OCI-LY7 (cell line): ENCODE measurements at regions of chr20 and their contacts with region 1.

Region 1: GRCh38 chr20:5950271-5951031 is at the starts of genes MCM8 and TRMT6:
- DNase-seq: peak; percentile 99
- H3K4me3 ChIP-seq: peak within 1 kb of the TSS; percentile 87
- H3K27ac ChIP-seq: peak within 1 kb of the TSS; percentile 72
- H3K4me1 ChIP-seq: peaks cover 16% of the 10 kb centered on the region
- CTCF ChIP-seq: no peak
- total RNA-seq, gene MCM8: 43.7 and 46.3 TPM in 2 replicates
- total RNA-seq, gene TRMT6: 22.5 and 26.4 TPM in 2 replicates

Region 2: DNA sequence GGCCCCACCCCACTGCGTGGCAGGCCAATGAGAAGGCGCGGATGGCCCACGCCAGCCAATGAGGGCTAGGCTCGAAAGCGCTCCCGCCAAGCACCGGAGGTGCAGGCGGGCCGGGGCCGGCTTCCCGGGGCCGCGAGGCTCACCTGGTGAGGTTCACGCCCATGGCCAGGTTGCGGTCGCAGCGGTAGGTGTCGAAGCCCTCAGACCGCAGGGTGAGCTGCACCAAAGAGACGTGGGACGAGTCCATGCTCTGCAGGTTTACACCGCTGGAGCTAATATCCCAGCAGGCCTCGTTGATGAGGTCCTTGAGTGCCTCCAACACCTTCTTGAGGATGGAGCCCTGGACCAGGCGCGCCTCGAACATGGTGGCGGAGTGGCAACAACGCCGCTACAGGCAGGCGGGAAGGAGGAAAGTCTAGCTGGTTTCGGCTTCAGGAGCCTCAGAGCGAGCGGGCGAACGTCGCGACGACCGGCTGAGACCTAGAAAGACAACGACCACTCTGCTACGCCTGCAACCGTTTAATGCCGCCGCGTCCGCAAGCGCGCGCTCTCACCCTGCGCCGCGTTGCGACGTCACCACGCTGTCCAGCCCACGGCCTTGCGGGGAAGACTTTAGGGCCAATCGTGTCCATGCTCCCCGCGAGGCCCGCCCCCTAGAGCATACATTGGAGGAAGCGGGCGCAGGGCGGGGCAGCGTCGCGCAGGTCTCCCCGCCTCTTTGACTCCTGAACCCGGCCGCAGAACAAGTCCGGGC is 830.8 kb before region 1 on chr20 and contains the start of gene PCNA:
- CTCF ChIA-PET with region 1: no interaction called
- POLR2A ChIA-PET with region 1: no interaction called
- intact Hi-C with region 1: loop called (anchors 5 kb)
- DNase-seq: peak; percentile 99
- H3K4me3 ChIP-seq: peak within 1 kb of the TSS; percentile 98
- H3K27ac ChIP-seq: peak within 1 kb of the TSS; percentile 89
- H3K4me1 ChIP-seq: peaks cover 47% of the 10 kb centered on the region
- CTCF ChIP-seq: no peak
- total RNA-seq, gene PCNA: 499 and 567 TPM in 2 replicates

Region 3: GRCh38 chr20:5741089-5741488 is 209.4 kb before region 1 on chr20:
- CTCF ChIA-PET with region 1: no interaction called
- POLR2A ChIA-PET with region 1: no interaction called
- intact Hi-C with region 1: no loop called
- DNase-seq: no peak
- H3K4me3 ChIP-seq: no peak overlapping the region
- H3K27ac ChIP-seq: no peak overlapping the region
- H3K4me1 ChIP-seq: peaks cover 41% of the 10 kb centered on the region
- CTCF ChIP-seq: no peak

Region 4: DNA sequence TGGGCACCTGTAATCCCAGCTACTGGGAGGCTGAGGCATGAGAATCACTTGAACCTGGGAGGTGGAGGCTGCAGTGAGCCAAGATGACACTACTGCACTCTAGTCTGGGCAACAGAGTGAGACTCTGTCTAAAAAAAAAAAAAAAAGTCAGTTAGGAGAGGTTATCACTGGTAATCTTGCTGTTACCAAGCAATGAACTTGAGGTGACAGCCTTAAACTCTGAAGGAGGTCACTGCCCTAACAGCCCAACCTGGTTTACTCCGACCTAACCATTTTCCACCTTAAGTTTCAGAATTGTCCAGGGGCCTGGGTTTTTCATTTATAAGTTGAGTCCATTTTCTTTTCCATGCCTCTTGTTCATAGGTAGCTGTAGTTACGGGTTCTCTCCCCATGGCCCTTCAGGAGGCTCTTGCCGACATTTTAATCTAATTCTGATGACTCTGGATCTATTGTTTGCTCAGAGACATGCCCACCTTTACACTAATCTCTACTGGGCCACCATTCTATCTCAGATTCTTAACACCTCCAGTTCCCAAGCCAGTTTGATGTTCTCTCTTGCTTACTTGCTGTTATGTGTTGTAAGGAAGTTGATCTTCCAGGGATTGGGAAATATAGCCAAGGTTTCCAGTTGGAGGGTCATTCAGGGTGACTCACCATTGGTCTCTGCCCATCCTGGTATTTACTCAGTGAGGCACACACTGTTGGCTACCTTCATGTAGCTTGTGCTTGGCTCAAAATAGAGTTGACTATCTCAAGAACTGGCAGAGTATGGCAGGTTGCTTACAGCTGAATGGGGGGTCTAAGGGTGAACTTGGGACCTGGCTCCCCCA is 171.2 kb before region 1 on chr20:
- CTCF ChIA-PET with region 1: no interaction called
- POLR2A ChIA-PET with region 1: no interaction called
- intact Hi-C with region 1: no loop called
- DNase-seq: no peak
- H3K4me3 ChIP-seq: no peak overlapping the region
- H3K27ac ChIP-seq: no peak overlapping the region
- H3K4me1 ChIP-seq: no peaks in the 10 kb centered on the region
- CTCF ChIP-seq: no peak

Region 5: GRCh38 chr20:5797843-5798462 is 152.5 kb before region 1 on chr20:
- CTCF ChIA-PET with region 1: no interaction called
- POLR2A ChIA-PET with region 1: interaction called, 4 read pairs
- intact Hi-C with region 1: loop called (anchors 5 kb)
- DNase-seq: peak; percentile 98
- H3K4me3 ChIP-seq: peak overlapping the region; percentile 14
- H3K27ac ChIP-seq: peak overlapping the region; percentile 97
- H3K4me1 ChIP-seq: peaks cover 95% of the 10 kb centered on the region
- CTCF ChIP-seq: no peak

Region 6: DNA sequence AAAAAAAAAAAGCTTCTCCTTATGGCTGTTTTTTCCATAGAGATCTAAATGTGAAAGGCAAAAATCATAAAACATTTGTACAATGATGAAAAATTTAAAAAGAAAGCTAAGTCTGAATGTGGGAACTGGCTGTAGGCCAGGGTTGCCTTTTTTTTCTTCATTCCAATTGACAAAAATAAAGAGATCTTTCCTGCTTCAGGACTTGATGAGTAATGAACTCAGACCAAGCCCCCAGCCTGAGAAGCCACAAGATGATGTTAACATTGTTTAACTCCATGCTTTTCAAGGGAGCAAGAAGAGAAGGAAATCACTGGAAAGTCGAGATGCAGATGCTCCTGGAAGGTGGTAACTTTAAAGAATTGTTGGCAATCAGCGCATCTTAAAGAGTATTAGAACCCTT is 41.5 kb before region 1 on chr20:
- CTCF ChIA-PET with region 1: no interaction called
- POLR2A ChIA-PET with region 1: no interaction called
- intact Hi-C with region 1: no loop called
- DNase-seq: no peak
- H3K4me3 ChIP-seq: no peak overlapping the region
- H3K27ac ChIP-seq: no peak overlapping the region
- H3K4me1 ChIP-seq: peaks cover 9% of the 10 kb centered on the region
- CTCF ChIP-seq: no peak